ENCODE measurements at regions of chr3 and their contacts with region 1.

Region 1: DNA sequence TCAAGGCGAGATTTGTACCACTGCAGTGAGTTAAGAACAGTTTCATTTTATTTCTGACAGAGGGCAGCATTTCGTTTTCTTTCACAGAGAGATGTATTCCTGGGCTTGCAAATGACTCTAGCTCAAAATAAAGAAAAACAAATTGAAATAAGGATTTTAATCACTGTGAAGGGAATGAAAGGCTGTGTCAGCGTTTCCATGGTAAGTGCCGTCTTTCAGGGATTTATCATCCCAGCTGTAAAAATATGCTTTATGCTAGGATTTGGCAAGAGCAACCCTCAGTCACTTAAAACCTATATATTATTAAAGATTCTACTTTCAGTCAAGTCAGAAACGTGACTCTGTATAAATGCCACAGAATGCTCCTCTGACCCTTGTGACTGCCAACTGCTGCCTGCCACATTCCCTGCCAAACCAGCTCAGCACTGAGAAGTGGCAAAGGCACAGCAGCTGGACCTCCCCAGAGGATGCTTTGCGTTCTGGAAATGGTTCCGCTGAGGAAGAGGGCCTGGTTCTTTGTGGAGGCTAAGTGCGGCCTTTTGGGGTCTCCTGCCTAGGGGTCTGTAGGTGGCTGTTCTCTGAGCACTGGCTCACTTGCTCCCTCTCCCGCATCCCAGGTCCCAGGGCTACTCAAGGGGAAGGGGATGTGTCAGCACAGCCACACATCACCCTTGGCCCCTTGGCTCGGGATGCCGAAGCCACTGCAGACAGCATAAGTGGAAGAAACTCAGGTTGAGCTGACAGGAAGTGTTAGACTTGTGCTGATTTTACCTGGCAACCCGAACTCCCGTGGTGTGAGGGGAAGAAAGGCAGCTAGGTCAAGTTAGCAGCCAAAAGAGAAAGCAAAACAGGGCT is 56.6 kb upstream of the POMGNT2 start:
- DNase-seq: peak; percentile 77
- ATAC-seq: peak; percentile 94
- H3K4me3 ChIP-seq: no peak overlapping the region
- H3K27ac ChIP-seq: peak overlapping the region; percentile 62
- H3K4me1 ChIP-seq: peaks cover 13% of the 10 kb centered on the region
- H3K27me3 ChIP-seq: no peaks in the 10 kb centered on the region
- CTCF ChIP-seq: peak; percentile 86

Region 2: GRCh38 chr3:43180027-43180426 is 17.6 kb after region 1 on chr3:
- CTCF ChIA-PET with region 1: interaction called, 7 read pairs
- POLR2A ChIA-PET with region 1: interaction called, 4 read pairs
- intact Hi-C with region 1: loop called (anchors 1 kb)
- DNase-seq: peak; percentile 97
- ATAC-seq: peak; percentile 67
- H3K4me3 ChIP-seq: no peak overlapping the region
- H3K27ac ChIP-seq: peak overlapping the region; percentile 99
- H3K4me1 ChIP-seq: peaks cover 43% of the 10 kb centered on the region
- H3K27me3 ChIP-seq: no peaks in the 10 kb centered on the region
- CTCF ChIP-seq: no peak

Region 3: DNA sequence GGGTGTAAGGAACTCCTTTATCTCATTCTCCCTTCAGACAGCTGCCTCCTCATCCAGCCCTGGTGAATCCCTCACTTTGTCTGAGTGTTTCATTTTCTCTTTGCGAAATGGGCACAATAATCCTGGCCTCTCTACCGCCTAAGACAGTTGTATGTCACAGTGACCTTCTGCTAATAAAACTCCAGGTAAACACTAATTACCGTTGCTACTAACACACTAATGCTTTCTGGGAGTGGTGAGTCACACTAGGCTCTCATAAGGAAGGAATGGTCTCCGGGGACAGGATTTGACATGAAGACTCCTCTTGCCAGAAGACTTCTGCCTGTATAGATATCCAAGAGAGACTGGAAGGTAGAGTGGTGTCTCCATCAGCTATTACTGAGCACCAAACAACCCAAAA is 52.2 kb after region 1 on chr3:
- CTCF ChIA-PET with region 1: no interaction called
- POLR2A ChIA-PET with region 1: no interaction called
- intact Hi-C with region 1: loop called (anchors 1 kb)
- DNase-seq: peak; percentile 91
- ATAC-seq: peak; percentile 91
- H3K4me3 ChIP-seq: no peak overlapping the region
- H3K27ac ChIP-seq: peak overlapping the region; percentile 71
- H3K4me1 ChIP-seq: peaks cover 30% of the 10 kb centered on the region
- H3K27me3 ChIP-seq: no peaks in the 10 kb centered on the region
- CTCF ChIP-seq: no peak

Region 4: DNA sequence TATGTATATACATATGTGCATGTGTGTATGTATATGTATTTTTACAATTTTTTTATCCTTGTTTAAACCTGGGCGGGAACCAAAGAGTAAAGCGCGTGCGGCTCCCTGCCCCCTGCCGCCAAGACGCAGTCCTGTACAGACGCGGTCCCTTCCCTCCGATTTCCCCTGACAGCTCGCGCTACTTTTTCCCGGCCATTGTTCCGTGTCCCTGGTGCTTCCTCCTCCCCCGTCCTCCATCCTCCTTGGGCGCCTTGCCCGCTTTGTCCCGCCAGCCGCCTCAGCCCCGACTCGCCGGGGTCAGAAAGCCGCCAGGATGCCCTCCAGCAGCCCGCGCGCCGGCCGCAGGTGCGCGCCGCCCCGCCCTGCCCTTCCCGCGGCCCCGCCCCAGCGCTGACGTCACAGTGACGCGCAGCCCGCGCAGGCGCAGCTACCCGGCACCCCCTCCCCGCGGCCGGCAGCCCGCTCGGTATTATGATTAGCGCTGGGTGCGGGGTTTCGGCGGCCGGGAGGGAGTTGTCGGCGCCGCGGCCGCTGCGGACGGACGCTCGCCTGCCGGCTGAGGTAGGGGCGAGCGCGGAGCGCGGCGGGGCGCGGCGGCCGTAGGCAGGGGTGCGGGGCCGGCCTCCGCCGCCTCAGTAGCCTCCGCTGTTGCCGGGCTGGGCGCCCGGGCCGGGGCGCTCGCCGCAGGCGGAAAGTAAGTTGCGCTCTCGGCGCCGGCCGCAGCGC is 123.8 kb after region 1 on chr3 and contains the start of gene SNRK:
- CTCF ChIA-PET with region 1: interaction called, 6 read pairs
- POLR2A ChIA-PET with region 1: no interaction called
- intact Hi-C with region 1: loop called (anchors 1 kb)
- DNase-seq: peak; percentile 89
- ATAC-seq: peak; percentile 69
- H3K4me3 ChIP-seq: peak within 1 kb of the TSS; percentile 85
- H3K27ac ChIP-seq: peak within 1 kb of the TSS; percentile 60
- H3K4me1 ChIP-seq: peaks cover 36% of the 10 kb centered on the region
- H3K27me3 ChIP-seq: no peaks in the 10 kb centered on the region
- CTCF ChIP-seq: no peak; the same call in 1 of the 2 replicates
- total RNA-seq, gene SNRK: 53.3 and 53.4 TPM in 2 replicates

Region 5: GRCh38 chr3:43465087-43465486 is 302.6 kb after region 1 on chr3:
- CTCF ChIA-PET with region 1: no interaction called
- POLR2A ChIA-PET with region 1: no interaction called
- intact Hi-C with region 1: loop called (anchors 1 kb)
- DNase-seq: peak; percentile 91
- ATAC-seq: peak; percentile 99
- H3K4me3 ChIP-seq: no peak overlapping the region
- H3K27ac ChIP-seq: peak overlapping the region; percentile 87
- H3K4me1 ChIP-seq: peaks cover 18% of the 10 kb centered on the region
- H3K27me3 ChIP-seq: no peaks in the 10 kb centered on the region
- CTCF ChIP-seq: no peak

Region 6: DNA sequence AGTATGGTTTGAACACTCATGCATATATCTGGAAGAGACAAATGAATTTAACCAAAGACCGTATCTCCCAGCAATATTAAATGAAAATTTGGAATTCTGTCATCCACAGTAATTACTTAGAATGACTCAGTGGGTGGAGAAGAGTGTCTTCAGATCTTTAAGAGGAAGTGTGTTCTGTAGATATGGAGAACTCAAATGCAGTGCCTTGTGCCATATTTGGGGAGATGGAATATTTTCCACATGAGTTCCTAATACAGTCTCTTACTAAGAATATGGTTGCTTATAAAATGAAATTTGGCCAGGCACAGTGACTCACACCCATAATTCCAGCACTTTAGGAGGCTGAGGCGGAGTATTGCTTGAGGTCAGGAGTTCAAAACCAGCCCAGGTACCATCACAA is 418.9 kb after region 1 on chr3:
- CTCF ChIA-PET with region 1: no interaction called
- POLR2A ChIA-PET with region 1: no interaction called
- intact Hi-C with region 1: no loop called
- DNase-seq: peak; percentile 4
- ATAC-seq: peak; percentile 43; the same call in 1 of the 2 replicates
- H3K4me3 ChIP-seq: no peak overlapping the region
- H3K27ac ChIP-seq: no peak overlapping the region
- H3K4me1 ChIP-seq: no peaks in the 10 kb centered on the region
- H3K27me3 ChIP-seq: no peaks in the 10 kb centered on the region
- CTCF ChIP-seq: no peak

Region 7: DNA sequence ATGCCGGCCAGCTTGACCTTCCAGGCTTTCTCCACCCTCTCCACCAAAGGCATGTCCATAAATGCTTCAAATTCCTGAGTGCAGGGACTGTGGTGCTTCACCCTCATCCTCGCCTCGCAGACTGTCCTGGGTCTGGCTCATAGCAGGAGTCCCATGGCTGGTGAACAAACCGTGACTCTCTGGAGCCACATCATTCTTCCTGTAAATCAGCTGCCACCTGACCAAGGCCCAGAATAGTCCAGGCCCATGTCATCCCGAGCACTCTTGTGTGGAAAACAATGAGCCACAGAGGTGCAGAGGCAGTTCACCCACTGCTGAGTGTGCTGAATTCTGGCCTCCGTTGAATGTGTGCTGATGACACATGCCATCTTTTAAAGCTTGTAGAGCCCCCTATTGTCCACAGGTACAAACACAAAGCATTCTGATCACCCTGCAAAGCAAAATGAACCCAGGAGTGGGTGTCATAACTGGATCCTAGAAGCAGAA is 596.9 kb after region 1 on chr3:
- CTCF ChIA-PET with region 1: no interaction called
- POLR2A ChIA-PET with region 1: no interaction called
- intact Hi-C with region 1: loop called (anchors 10 kb)
- DNase-seq: peak; percentile 83
- ATAC-seq: peak; percentile 88
- H3K4me3 ChIP-seq: no peak overlapping the region
- H3K27ac ChIP-seq: peak overlapping the region; percentile 49
- H3K4me1 ChIP-seq: peaks cover 35% of the 10 kb centered on the region
- H3K27me3 ChIP-seq: no peaks in the 10 kb centered on the region
- CTCF ChIP-seq: peak; percentile 75